ENCODE measurements at regions of chr7 and their contacts with region 1.

Region 1: GRCh38 chr7:22822486-22823141 is at the start of gene TOMM7:
- DNase-seq: peak; percentile 97
- ATAC-seq: peak; percentile 93
- H3K4me3 ChIP-seq: peak within 1 kb of the TSS; percentile 82
- H3K27ac ChIP-seq: peak within 1 kb of the TSS; percentile 88
- H3K4me1 ChIP-seq: peaks cover 5% of the 10 kb centered on the region
- H3K27me3 ChIP-seq: no peaks in the 10 kb centered on the region
- CTCF ChIP-seq: peak; percentile 53
- POLR2A ChIP-seq: peak; percentile 86
- RAD21 ChIP-seq: peak; percentile 52
- total RNA-seq, gene TOMM7: 67.2 and 125 TPM in 2 replicates

Region 2: GRCh38 chr7:22577396-22578001 is 245.1 kb before region 1 on chr7:
- CTCF ChIA-PET with region 1: no interaction called
- POLR2A ChIA-PET with region 1: interaction called, 13 read pairs
- dilution Hi-C with region 1: no loop called
- in situ Hi-C with region 1: no loop called
- intact Hi-C with region 1: no loop called
- DNase-seq: peak; percentile 98
- ATAC-seq: peak; percentile 88
- H3K4me3 ChIP-seq: no peak overlapping the region
- H3K27ac ChIP-seq: peak overlapping the region; percentile 85
- H3K4me1 ChIP-seq: peaks cover 9% of the 10 kb centered on the region
- H3K27me3 ChIP-seq: no peaks in the 10 kb centered on the region
- CTCF ChIP-seq: no peak
- POLR2A ChIP-seq: no peak
- RAD21 ChIP-seq: peak; percentile 11; the same call in 1 of the 2 replicates

Region 3: DNA sequence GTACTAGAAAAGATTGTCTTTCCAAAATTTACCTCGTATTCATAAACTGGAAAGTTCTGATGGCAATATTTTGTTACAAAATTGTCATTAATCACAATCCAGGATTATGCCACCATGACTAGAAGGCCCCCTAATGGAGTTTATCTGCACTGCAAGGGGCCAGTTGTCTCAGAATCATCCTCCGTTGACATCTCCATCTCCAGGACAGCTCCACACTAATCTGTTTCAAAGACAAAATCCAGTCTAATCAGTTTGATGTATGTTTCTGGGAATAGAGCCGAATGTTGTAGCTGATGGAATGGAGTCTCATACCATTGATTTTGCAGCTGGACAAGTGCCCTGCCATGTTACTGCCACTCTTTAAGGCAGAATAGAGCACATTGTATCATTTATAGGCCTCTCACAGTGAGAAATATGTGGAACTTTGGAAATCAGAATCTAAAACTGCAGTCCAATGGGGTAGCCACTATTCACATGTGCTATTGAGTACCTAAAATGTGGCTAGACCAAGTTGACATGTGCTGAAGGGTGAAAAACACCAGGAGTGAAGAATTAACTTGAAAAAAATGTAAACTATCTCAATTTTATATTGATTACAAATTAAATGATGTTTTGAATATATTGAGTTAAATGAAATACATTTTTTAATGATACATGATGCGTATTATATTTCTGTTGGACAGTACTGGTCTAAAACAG is 38.3 kb after region 1 on chr7:
- CTCF ChIA-PET with region 1: no interaction called
- POLR2A ChIA-PET with region 1: no interaction called
- dilution Hi-C with region 1: no loop called
- in situ Hi-C with region 1: no loop called
- intact Hi-C with region 1: no loop called
- DNase-seq: no peak
- ATAC-seq: no peak
- H3K4me3 ChIP-seq: no peak overlapping the region
- H3K27ac ChIP-seq: peak overlapping the region; percentile 10; the same call in 1 of the 2 replicates
- H3K4me1 ChIP-seq: peaks cover 23% of the 10 kb centered on the region
- H3K27me3 ChIP-seq: no peaks in the 10 kb centered on the region
- CTCF ChIP-seq: peak; percentile 33
- POLR2A ChIP-seq: no peak; the same call in 1 of the 2 replicates
- RAD21 ChIP-seq: peak; percentile 33; the same call in 1 of the 2 replicates

Region 4: DNA sequence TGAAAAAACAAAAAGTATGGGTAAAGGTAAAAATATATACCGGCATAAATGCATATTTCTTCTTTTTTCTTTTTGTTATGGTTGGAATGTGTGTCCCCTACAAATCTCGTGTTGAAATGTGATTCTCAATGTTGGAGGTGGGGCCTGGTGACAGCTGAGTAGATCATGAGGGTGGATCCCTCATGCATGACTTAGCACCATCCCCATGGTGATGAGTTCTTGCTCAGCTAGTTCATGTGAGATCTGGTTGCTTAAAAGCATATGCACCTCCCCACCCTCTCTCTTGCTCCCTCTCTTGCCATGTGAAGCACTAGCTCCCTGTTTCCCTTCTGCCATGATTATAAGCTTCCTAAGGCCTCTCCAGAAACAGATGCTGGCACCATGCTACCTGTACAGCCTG is 98.1 kb after region 1 on chr7:
- CTCF ChIA-PET with region 1: no interaction called
- POLR2A ChIA-PET with region 1: no interaction called
- dilution Hi-C with region 1: no loop called
- in situ Hi-C with region 1: no loop called
- intact Hi-C with region 1: no loop called
- DNase-seq: no peak
- ATAC-seq: no peak
- H3K4me3 ChIP-seq: no peak overlapping the region
- H3K27ac ChIP-seq: no peak overlapping the region
- H3K4me1 ChIP-seq: no peaks in the 10 kb centered on the region
- H3K27me3 ChIP-seq: no peaks in the 10 kb centered on the region
- CTCF ChIP-seq: no peak
- POLR2A ChIP-seq: no peak
- RAD21 ChIP-seq: no peak

Region 5: DNA sequence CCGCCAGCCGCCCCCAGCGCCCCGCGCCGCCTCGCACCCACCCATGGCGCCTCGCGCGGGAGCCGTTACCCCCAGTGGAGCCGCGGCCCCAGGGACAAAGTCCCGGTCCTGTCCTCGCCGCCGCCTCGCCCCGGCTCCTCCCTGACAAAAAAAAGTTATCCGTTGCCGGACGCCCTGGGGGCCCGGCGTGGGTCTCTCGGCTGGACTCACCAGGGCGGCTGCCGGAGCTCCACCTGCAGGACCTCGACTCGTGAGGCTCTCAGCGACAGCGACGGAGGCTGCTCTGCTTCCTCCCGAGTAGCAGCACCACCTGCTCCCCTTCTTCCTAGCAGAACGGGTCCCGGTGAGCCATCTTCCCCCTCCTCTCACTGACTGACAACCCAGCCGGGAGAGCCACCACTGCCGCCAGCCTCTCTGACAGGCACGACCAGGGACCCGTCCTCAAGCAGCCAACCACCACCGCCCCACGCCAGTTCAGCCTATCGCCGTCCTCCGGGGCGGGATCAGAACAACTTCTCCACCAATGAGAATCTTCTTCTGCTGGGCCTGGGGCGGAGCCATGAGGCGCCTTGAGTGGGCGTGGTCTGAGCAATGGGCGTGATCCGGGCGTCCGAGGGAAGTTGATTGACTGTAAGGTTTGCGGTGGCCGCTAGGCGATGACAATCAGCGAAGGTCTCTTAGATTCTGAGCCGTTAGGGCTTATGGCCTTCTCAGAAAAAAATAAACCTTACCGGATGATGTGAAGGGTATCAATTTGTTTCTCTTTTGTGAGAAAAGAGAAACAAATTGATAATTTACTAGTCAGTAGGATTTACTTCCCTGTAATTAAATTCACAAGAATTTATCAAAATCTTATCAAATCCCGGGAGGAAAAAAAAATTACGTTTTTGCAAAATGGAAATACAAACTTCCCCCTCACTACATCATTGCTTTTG is 191.4 kb after region 1 on chr7 and contains the start of gene HYCC1:
- CTCF ChIA-PET with region 1: no interaction called
- POLR2A ChIA-PET with region 1: no interaction called
- dilution Hi-C with region 1: no loop called
- in situ Hi-C with region 1: no loop called
- intact Hi-C with region 1: loop called (anchors 2 kb)
- DNase-seq: peak; percentile 99
- ATAC-seq: peak; percentile 99
- H3K4me3 ChIP-seq: peak within 1 kb of the TSS; percentile 66
- H3K27ac ChIP-seq: peak within 1 kb of the TSS; percentile 77
- H3K4me1 ChIP-seq: peaks cover 7% of the 10 kb centered on the region; the same call in 1 of the 2 replicates
- H3K27me3 ChIP-seq: no peaks in the 10 kb centered on the region
- CTCF ChIP-seq: peak; percentile 53
- POLR2A ChIP-seq: peak; percentile 96
- RAD21 ChIP-seq: peak; percentile 40
- total RNA-seq, gene HYCC1: 78.3 and 185 TPM in 2 replicates